IMR-90 (cell line): ENCODE measurements at regions of chr4 and their contacts with region 1.

Region 1: GRCh38 chr4:15457406-15458201 is 12.1 kb upstream of the CC2D2A start:
- DNase-seq: peak; percentile 81
- ATAC-seq: peak; percentile 88
- H3K4me3 ChIP-seq: no peak overlapping the region
- H3K27ac ChIP-seq: peak overlapping the region; percentile 85; the same call in 1 of the 2 replicates
- H3K4me1 ChIP-seq: peaks cover 23% of the 10 kb centered on the region
- H3K27me3 ChIP-seq: peaks cover 4% of the 10 kb centered on the region
- CTCF ChIP-seq: peak; percentile 83
- POLR2A ChIP-seq: no peak
- RAD21 ChIP-seq: peak; percentile 84

Region 2: DNA sequence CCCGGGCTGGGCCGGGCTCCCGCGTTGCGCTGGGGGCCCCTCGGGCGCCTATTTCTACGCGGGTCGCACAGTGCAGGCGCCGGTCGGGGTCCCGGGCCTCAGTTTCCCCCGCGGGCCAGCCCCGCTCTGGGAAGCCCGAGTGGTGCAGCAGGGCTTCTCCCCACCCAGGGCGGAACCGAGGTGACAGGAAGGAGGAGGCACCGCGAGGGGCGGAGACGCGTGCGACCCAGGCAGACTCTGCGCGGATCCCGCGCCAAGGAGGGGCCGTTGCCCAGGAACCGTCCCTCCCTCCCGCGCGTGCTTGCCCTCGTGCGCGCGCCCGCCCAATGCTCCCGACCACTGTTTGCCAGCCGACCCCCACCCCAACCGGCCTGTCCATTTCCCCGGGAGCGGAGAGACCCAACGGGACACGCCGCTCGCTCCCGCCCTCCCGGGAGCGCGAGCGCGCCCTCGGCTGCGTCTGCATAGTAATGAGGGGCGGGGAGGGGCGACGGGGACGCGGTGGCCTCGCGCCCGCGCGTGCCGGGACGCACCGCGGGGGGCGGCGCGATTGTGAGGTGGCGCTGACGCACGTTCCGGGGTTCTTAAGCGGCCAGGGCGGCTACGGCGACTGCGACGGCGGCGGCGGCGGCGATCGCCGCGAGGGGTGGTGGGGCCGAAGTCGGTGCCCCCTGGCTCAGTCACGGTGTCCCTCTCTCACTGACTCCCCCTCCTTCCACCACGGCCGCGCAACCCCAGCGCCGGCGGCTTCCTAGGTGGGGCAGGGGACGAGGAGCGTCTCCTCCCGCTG is 455.5 kb before region 1 on chr4 and contains the start of gene CPEB2:
- CTCF ChIA-PET with region 1: no interaction called
- POLR2A ChIA-PET with region 1: no interaction called
- dilution Hi-C with region 1: no loop called
- in situ Hi-C with region 1: no loop called
- intact Hi-C with region 1: loop called (anchors 2 kb)
- DNase-seq: peak; percentile 97
- ATAC-seq: peak; percentile 65
- H3K4me3 ChIP-seq: peak within 1 kb of the TSS; percentile 69
- H3K27ac ChIP-seq: peak within 1 kb of the TSS; percentile 93
- H3K4me1 ChIP-seq: no peaks in the 10 kb centered on the region
- H3K27me3 ChIP-seq: no peaks in the 10 kb centered on the region
- CTCF ChIP-seq: no peak
- POLR2A ChIP-seq: peak; percentile 96
- RAD21 ChIP-seq: no peak
- total RNA-seq, gene CPEB2: 10.6 and 18.1 TPM in 2 replicates

Region 3: GRCh38 chr4:15231265-15232091 is 226.1 kb before region 1 on chr4:
- CTCF ChIA-PET with region 1: interaction called, 14 read pairs
- POLR2A ChIA-PET with region 1: no interaction called
- dilution Hi-C with region 1: no loop called
- in situ Hi-C with region 1: loop called (anchors 5 kb)
- intact Hi-C with region 1: loop called (anchors 1 kb)
- DNase-seq: peak; percentile 88
- ATAC-seq: peak; percentile 78
- H3K4me3 ChIP-seq: no peak overlapping the region
- H3K27ac ChIP-seq: peak overlapping the region; percentile 31; the same call in 1 of the 2 replicates
- H3K4me1 ChIP-seq: peaks cover 27% of the 10 kb centered on the region
- H3K27me3 ChIP-seq: peaks cover 3% of the 10 kb centered on the region; the same call in 1 of the 2 replicates
- CTCF ChIP-seq: peak; percentile 88
- POLR2A ChIP-seq: no peak
- RAD21 ChIP-seq: peak; percentile 83

Region 4: GRCh38 chr4:15336410-15337172 is 121.0 kb before region 1 on chr4:
- CTCF ChIA-PET with region 1: interaction called, 3 read pairs
- POLR2A ChIA-PET with region 1: no interaction called
- dilution Hi-C with region 1: no loop called
- in situ Hi-C with region 1: loop called (anchors 10 kb)
- intact Hi-C with region 1: no loop called
- DNase-seq: peak; percentile 92
- ATAC-seq: peak; percentile 76
- H3K4me3 ChIP-seq: no peak overlapping the region
- H3K27ac ChIP-seq: peak overlapping the region; percentile 10
- H3K4me1 ChIP-seq: peaks cover 10% of the 10 kb centered on the region
- H3K27me3 ChIP-seq: peaks cover 2% of the 10 kb centered on the region
- CTCF ChIP-seq: no peak
- POLR2A ChIP-seq: no peak
- RAD21 ChIP-seq: no peak

Region 5: DNA sequence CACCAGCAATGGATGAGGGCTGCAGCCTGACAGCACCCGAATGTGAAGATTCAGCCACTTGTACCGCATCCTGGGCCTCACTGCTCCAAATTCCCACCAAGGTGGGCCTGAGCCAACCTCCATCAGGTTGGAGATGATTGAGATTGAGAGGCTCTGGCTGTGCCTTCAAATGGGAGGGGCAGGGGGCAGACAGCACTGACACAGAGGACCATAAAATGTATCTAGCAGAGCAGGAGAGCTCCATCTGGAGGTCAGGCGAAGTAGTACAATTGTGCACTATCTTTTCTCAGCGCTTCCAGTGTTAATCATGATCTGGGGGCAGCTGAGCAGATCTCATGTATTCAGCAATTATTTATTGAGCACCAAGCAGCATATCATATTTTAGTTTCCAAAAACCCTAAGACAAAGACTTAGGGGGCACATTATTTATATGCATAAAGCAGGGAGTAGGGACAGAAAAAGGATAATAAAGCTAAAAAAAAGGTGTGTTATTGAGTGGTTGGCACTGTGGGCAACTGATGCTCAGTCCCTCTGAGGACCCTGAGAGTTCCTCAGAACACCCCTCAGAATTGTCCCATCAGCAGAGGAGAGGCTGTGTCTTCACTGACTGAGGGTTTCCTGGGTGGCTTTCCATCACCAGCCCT is 61.3 kb before region 1 on chr4:
- CTCF ChIA-PET with region 1: interaction called, 14 read pairs
- POLR2A ChIA-PET with region 1: interaction called, 3 read pairs
- dilution Hi-C with region 1: no loop called
- in situ Hi-C with region 1: no loop called
- intact Hi-C with region 1: loop called (anchors 1 kb)
- DNase-seq: peak; percentile 48
- ATAC-seq: peak; percentile 46; the same call in 1 of the 2 replicates
- H3K4me3 ChIP-seq: no peak overlapping the region
- H3K27ac ChIP-seq: no peak overlapping the region
- H3K4me1 ChIP-seq: peaks cover 14% of the 10 kb centered on the region
- H3K27me3 ChIP-seq: peaks cover 7% of the 10 kb centered on the region
- CTCF ChIP-seq: peak; percentile 62
- POLR2A ChIP-seq: no peak
- RAD21 ChIP-seq: peak; percentile 65

Region 6: DNA sequence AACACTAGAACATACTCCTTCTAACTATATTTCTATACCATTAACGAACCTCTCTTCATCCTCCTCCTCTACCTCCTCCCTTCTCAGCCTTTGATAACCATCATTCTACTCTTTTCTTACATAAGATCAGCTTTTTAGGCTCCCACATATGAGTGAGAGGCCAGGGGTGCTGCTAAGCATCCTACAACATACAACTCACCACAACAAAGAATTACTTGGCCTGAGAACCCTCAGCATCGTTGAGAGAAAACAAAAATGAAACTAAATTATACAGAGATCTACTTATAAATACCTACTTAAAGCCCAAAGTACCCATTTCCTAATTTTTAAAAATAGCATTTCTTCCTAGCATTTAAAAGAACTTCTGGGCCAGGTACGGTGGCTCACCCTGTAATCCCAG is 89.8 kb after region 1 on chr4:
- CTCF ChIA-PET with region 1: no interaction called
- POLR2A ChIA-PET with region 1: no interaction called
- dilution Hi-C with region 1: no loop called
- in situ Hi-C with region 1: no loop called
- intact Hi-C with region 1: no loop called
- DNase-seq: no peak
- ATAC-seq: no peak
- H3K4me3 ChIP-seq: no peak overlapping the region
- H3K27ac ChIP-seq: no peak overlapping the region
- H3K4me1 ChIP-seq: no peaks in the 10 kb centered on the region
- H3K27me3 ChIP-seq: no peaks in the 10 kb centered on the region
- CTCF ChIP-seq: no peak
- POLR2A ChIP-seq: no peak
- RAD21 ChIP-seq: no peak